ENCODE measurements at regions of chr12 and their contacts with region 1.

Region 1: DNA sequence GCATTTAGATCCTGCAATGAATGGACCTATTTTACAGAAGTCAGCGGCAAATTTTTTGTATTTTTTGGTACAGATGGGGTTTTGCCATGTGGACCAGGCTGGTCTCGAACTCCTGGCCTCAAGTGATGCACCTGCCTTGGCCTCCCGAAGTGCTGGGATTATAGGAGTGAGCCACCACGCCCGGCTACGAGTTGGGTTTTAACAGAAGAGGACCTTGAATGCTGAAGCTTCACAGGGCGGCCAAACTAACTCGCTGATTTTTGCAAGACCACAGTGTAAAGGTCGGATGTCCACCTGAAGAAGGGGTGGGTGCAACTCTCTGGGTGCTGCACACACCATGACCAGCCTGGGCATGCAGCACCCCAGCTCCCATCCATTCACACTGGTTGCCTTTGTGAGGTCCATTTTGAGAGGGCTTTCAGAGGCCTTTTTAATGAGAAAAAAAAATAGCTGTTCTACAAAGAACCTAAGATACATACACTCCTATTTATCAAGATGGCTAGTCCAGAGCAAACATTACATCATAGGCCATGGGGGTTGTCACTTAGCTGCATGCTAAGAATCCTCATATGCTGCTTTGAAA is 21.6 kb upstream of the CDK2AP1 start:
- DNase-seq: no peak
- ATAC-seq: no peak
- H3K4me3 ChIP-seq: no peak overlapping the region
- H3K27ac ChIP-seq: no peak overlapping the region
- H3K4me1 ChIP-seq: no peaks in the 10 kb centered on the region
- H3K27me3 ChIP-seq: no peaks in the 10 kb centered on the region

Region 2: GRCh38 chr12:122984612-122985337 is 308.5 kb before region 1 on chr12:
- intact Hi-C with region 1: no loop called
- DNase-seq: peak in 1 of 2 donors; percentile 73
- ATAC-seq: no peak
- H3K4me3 ChIP-seq: no peak overlapping the region
- H3K27ac ChIP-seq: peak overlapping the region in 1 of 2 donors; percentile 60
- H3K4me1 ChIP-seq: peaks cover 0 to 4% of the 10 kb centered on the region in 2 donors
- H3K27me3 ChIP-seq: no peaks in the 10 kb centered on the region

Region 3: GRCh38 chr12:123126186-123127006 is 166.9 kb before region 1 on chr12:
- intact Hi-C with region 1: no loop called
- DNase-seq: peak in 1 of 2 donors; percentile 71
- ATAC-seq: peak; percentile 79
- H3K4me3 ChIP-seq: no peak overlapping the region
- H3K27ac ChIP-seq: no peak overlapping the region
- H3K4me1 ChIP-seq: no peaks in the 10 kb centered on the region
- H3K27me3 ChIP-seq: no peaks in the 10 kb centered on the region

Region 4: GRCh38 chr12:123354600-123354999 is 61.3 kb after region 1 on chr12:
- intact Hi-C with region 1: loop called in 1 of 2 experiments (anchors 10 kb)
- DNase-seq: no peak
- ATAC-seq: no peak
- H3K4me3 ChIP-seq: no peak overlapping the region
- H3K27ac ChIP-seq: no peak overlapping the region
- H3K4me1 ChIP-seq: peaks cover 2 to 3% of the 10 kb centered on the region in 2 donors
- H3K27me3 ChIP-seq: no peaks in the 10 kb centered on the region